AG04450 (cell line): ENCODE measurements at regions of chr15 and their contacts with region 1.

Region 1: GRCh38 chr15:31488426-31489204 is 162.0 kb downstream of the KLF13 start:
- DNase-seq: peak; percentile 81
- H3K4me3 ChIP-seq: no peak overlapping the region
- H3K27ac ChIP-seq: no peak overlapping the region
- H3K27me3 ChIP-seq: peaks cover 8% of the 10 kb centered on the region
- CTCF ChIP-seq: peak; percentile 97

Region 2: DNA sequence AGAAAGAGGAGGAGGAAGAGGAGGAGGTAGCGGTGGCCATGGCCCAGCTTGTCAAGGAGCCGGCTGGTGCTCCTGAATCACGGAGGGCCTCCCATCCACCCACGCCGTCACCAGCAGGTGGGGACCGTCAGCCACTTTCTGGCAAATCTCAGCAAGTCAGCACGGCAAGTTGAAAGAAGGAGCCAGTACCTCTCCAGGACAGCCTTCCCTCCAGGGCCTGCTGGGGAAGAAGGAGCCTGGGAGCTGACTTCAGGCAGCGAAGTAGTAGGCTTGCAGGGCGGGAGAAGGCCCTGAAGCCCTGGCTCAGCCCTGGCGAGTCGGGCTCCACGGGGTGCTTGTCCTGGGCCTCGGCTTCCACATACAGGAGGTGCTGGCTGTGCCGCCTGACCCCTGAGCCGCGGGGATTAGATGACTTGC is 287.9 kb before region 1 on chr15:
- CTCF ChIA-PET with region 1: interaction called, 49 read pairs
- POLR2A ChIA-PET with region 1: no interaction called
- DNase-seq: peak; percentile 15
- H3K4me3 ChIP-seq: no peak overlapping the region
- H3K27ac ChIP-seq: no peak overlapping the region
- H3K27me3 ChIP-seq: peaks cover 13% of the 10 kb centered on the region
- CTCF ChIP-seq: peak; percentile 42; the same call in 1 of the 2 replicates

Region 3: GRCh38 chr15:31215490-31216214 is 273.0 kb before region 1 on chr15:
- CTCF ChIA-PET with region 1: interaction called, 60 read pairs
- POLR2A ChIA-PET with region 1: no interaction called
- DNase-seq: no peak
- H3K4me3 ChIP-seq: peak overlapping the region; percentile 46
- H3K27ac ChIP-seq: no peak overlapping the region
- H3K27me3 ChIP-seq: peaks cover 18% of the 10 kb centered on the region
- CTCF ChIP-seq: peak; percentile 72

Region 4: GRCh38 chr15:31326156-31326732 is 162.4 kb before region 1 on chr15:
- CTCF ChIA-PET with region 1: interaction called, 20 read pairs
- POLR2A ChIA-PET with region 1: no interaction called
- DNase-seq: peak; percentile 92
- H3K4me3 ChIP-seq: peak overlapping the region; percentile 73
- H3K27ac ChIP-seq: peak overlapping the region; percentile 90
- H3K27me3 ChIP-seq: no peaks in the 10 kb centered on the region
- CTCF ChIP-seq: no peak

Region 5: GRCh38 chr15:31435261-31435911 is 53.2 kb before region 1 on chr15:
- CTCF ChIA-PET with region 1: interaction called, 89 read pairs
- POLR2A ChIA-PET with region 1: no interaction called
- DNase-seq: peak; percentile 32
- H3K4me3 ChIP-seq: peak overlapping the region; percentile 25
- H3K27ac ChIP-seq: peak overlapping the region; percentile 87
- H3K27me3 ChIP-seq: no peaks in the 10 kb centered on the region
- CTCF ChIP-seq: peak; percentile 70

Region 6: DNA sequence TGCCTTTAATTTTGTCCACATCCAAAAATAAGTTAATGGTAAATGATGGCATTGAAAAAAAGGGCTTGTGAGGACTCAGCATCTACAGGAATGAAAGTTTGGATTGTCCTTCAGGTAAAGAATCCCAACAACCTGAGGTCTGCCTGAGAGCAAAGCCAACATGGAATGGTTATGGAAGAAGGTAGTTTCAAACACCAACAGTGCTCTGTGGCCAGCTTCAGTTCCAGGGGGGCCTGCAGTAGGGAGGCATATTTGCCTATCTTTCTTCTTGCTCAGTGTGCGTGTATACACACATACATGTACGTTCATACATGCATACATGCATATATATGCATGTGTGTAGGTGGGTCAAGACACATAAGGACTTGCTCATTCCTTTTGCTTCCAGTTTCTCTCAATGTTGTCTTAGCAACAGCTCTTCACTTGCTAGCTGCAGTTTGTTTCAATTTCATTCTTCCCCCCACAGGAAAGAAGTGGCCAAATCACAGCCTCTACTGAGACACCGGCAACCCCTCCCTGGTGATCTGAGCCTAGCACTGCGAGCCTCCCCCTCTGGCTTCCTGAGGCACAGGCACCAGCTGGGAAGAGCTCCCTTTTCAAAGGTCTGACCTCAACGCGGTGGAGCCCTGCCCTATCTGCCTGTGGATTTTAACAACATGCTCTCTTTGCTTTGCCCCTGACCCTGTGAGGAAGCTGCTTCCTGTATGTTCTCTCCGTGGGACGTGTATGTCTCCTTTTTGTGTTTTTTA is 15.8 kb before region 1 on chr15:
- CTCF ChIA-PET with region 1: interaction called, 58 read pairs
- POLR2A ChIA-PET with region 1: interaction called, 6 read pairs
- DNase-seq: no peak
- H3K4me3 ChIP-seq: no peak overlapping the region
- H3K27ac ChIP-seq: no peak overlapping the region
- H3K27me3 ChIP-seq: no peaks in the 10 kb centered on the region
- CTCF ChIP-seq: no peak

Region 7: GRCh38 chr15:31513178-31513577 is 24.6 kb after region 1 on chr15:
- CTCF ChIA-PET with region 1: no interaction called
- POLR2A ChIA-PET with region 1: no interaction called
- DNase-seq: no peak
- H3K4me3 ChIP-seq: no peak overlapping the region
- H3K27ac ChIP-seq: no peak overlapping the region
- H3K27me3 ChIP-seq: peaks cover 2% of the 10 kb centered on the region
- CTCF ChIP-seq: no peak

Region 8: GRCh38 chr15:31740203-31740602 is 251.6 kb after region 1 on chr15:
- CTCF ChIA-PET with region 1: no interaction called
- POLR2A ChIA-PET with region 1: no interaction called
- DNase-seq: no peak
- H3K4me3 ChIP-seq: no peak overlapping the region
- H3K27ac ChIP-seq: no peak overlapping the region
- H3K27me3 ChIP-seq: no peaks in the 10 kb centered on the region
- CTCF ChIP-seq: no peak